CD8-positive, alpha-beta memory T cell (primary cell): ENCODE measurements at regions of chr7 and their contacts with region 1.

Region 1: DNA sequence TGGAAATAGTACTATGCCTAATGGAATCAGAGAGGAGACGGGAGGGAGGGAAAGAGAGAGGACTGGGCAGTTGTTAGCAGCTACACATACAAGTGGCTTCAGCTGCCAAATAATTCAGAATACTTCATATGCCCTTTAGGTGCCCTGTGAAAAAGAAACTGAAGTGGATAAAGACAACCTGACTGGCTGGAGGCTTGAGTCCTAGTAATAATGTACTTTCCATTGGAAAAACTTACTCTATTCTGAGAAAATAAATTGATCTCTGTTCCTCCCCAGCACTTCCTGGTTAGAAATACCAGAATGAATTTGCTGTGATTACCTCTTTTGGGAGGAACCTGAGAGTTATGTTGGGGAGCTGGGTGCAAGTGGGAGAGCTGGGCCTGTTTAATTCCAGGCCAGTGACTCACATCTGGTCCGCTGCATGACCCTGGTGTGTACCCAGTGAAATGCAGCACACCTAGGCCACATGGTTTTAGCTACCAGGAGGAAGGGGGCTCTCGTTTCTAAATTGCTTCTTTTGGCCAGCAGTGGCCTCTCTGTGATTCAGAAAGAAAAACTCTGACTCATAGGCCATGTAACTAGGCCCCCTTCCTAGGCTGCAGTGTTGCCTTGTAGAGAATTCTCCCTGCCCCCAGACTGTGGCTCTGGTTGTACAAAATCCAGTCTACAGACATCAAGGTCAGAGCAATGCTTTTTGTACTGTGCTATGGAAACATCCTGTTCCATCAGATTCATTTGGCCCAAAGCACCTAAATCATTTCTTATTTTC is 6.5 kb downstream of the AGFG2 start:
- DNase-seq: peak in 3 of 5 donors; percentile 18 to 67 (median 24)
- H3K4me3 ChIP-seq: peak overlapping the region; percentile 46
- H3K4me3 Mint-ChIP-seq: peak overlapping the region; percentile 60 to 98 (median 96)
- H3K27ac ChIP-seq: peak overlapping the region; percentile 70
- H3K27ac Mint-ChIP-seq: peak overlapping the region; percentile 86 to 99 (median 98)
- H3K4me1 ChIP-seq: peaks cover 97% of the 10 kb centered on the region
- H3K4me1 Mint-ChIP-seq: peaks cover 94 to 100% (median 99%) of the 10 kb centered on the region in 3 donors
- H3K27me3 ChIP-seq: no peaks in the 10 kb centered on the region
- H3K27me3 Mint-ChIP-seq: no peaks in the 10 kb centered on the region

Region 2: GRCh38 chr7:100364480-100364879 is 181.1 kb before region 1 on chr7:
- CTCF ChIA-PET with region 1: no interaction called
- POLR2A ChIA-PET with region 1: interaction called, 11 read pairs
- DNase-seq: no peak
- H3K4me3 ChIP-seq: no peak overlapping the region
- H3K4me3 Mint-ChIP-seq: no peak overlapping the region
- H3K27ac ChIP-seq: no peak overlapping the region
- H3K27ac Mint-ChIP-seq: peak overlapping the region in 6 of 8 donors; percentile 7 to 85 (median 60)
- H3K4me1 ChIP-seq: peaks cover 10% of the 10 kb centered on the region
- H3K4me1 Mint-ChIP-seq: peaks cover 32 to 50% (median 46%) of the 10 kb centered on the region in 3 donors
- H3K27me3 ChIP-seq: no peaks in the 10 kb centered on the region
- H3K27me3 Mint-ChIP-seq: no peaks in the 10 kb centered on the region

Region 3: GRCh38 chr7:100469227-100470044 is 76.1 kb before region 1 on chr7:
- CTCF ChIA-PET with region 1: interaction called, 11 read pairs
- POLR2A ChIA-PET with region 1: interaction called, 5 read pairs
- DNase-seq: peak; percentile 69 to 86 (median 80)
- H3K4me3 ChIP-seq: no peak overlapping the region
- H3K4me3 Mint-ChIP-seq: no peak overlapping the region
- H3K27ac ChIP-seq: no peak overlapping the region
- H3K27ac Mint-ChIP-seq: peak overlapping the region in 7 of 8 donors; percentile 64 to 83 (median 70)
- H3K4me1 ChIP-seq: peaks cover 24% of the 10 kb centered on the region
- H3K4me1 Mint-ChIP-seq: peaks cover 17 to 46% (median 31%) of the 10 kb centered on the region in 3 donors
- H3K27me3 ChIP-seq: no peaks in the 10 kb centered on the region
- H3K27me3 Mint-ChIP-seq: no peaks in the 10 kb centered on the region

Region 4: DNA sequence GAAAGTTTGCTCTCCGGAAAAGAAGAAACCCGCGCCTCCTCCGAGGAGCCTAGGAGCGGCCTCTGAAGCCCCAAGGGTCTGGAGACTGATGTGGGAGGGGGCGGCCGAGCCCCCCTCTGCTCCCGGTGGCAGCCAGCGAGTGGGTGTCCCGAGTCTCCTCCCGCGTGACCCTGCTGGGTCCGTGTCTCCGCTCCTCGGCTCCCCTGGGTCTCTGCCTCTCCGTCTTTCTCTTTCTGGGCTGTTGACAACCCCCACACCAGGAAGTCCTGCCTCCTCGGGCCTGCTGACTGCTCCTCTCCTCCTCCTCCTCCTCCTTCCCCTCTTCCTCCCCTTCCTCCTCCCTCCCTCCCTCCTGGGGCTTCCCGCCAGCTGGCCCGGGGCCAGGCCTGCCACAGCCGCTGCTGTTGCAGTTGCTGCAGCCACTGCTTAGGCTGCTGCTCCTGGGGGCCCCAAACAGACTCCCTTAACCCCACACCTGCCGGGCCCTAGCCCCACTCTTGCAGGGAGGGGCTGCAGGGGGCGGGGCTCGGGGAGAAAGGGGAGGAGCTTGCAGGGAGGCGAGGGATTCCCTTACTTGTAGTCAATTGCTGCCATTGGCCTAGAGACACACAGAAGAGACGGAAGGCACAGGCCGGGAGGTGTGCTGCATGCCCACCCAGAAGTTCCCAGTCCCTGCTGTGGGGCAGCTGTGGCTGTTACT is 66.4 kb before region 1 on chr7 and contains the start of gene TSC22D4:
- CTCF ChIA-PET with region 1: interaction called, 30 read pairs
- POLR2A ChIA-PET with region 1: interaction called, 8 read pairs
- DNase-seq: peak; percentile 88 to 97 (median 93)
- H3K4me3 ChIP-seq: peak within 1 kb of the TSS; percentile 66
- H3K4me3 Mint-ChIP-seq: peak within 1 kb of the TSS; percentile 93 to 100 (median 99)
- H3K27ac ChIP-seq: peak within 1 kb of the TSS; percentile 90
- H3K27ac Mint-ChIP-seq: peak within 1 kb of the TSS; percentile 87 to 100 (median 94)
- H3K4me1 ChIP-seq: peaks cover 50% of the 10 kb centered on the region
- H3K4me1 Mint-ChIP-seq: peaks cover 31 to 50% (median 47%) of the 10 kb centered on the region in 3 donors
- H3K27me3 ChIP-seq: no peaks in the 10 kb centered on the region
- H3K27me3 Mint-ChIP-seq: peaks cover 0 to 6% of the 10 kb centered on the region in 2 donors
- total RNA-seq, gene TSC22D4: 96.2 to 99.1 TPM

Region 5: GRCh38 chr7:100516135-100516812 is 29.3 kb before region 1 on chr7:
- CTCF ChIA-PET with region 1: interaction called, 9 read pairs
- POLR2A ChIA-PET with region 1: interaction called, 12 read pairs
- DNase-seq: peak; percentile 30 to 84 (median 62)
- H3K4me3 ChIP-seq: peak overlapping the region; percentile 34
- H3K4me3 Mint-ChIP-seq: peak overlapping the region in 6 of 7 donors; percentile 57 to 87 (median 62)
- H3K27ac ChIP-seq: peak overlapping the region; percentile 10
- H3K27ac Mint-ChIP-seq: peak overlapping the region; percentile 0 to 87 (median 32)
- H3K4me1 ChIP-seq: peaks cover 36% of the 10 kb centered on the region
- H3K4me1 Mint-ChIP-seq: peaks cover 27 to 35% (median 29%) of the 10 kb centered on the region in 3 donors
- H3K27me3 ChIP-seq: no peaks in the 10 kb centered on the region
- H3K27me3 Mint-ChIP-seq: no peaks in the 10 kb centered on the region

Region 6: GRCh38 chr7:100611974-100612729 is 66.6 kb after region 1 on chr7 and contains the start of gene MOSPD3:
- CTCF ChIA-PET with region 1: no interaction called
- POLR2A ChIA-PET with region 1: no interaction called
- DNase-seq: peak; percentile 96 to 98 (median 98)
- H3K4me3 ChIP-seq: peak within 1 kb of the TSS; percentile 99
- H3K4me3 Mint-ChIP-seq: peak within 1 kb of the TSS; percentile 91 to 100 (median 99)
- H3K27ac ChIP-seq: peak within 1 kb of the TSS; percentile 99
- H3K27ac Mint-ChIP-seq: peak within 1 kb of the TSS; percentile 94 to 100 (median 100)
- H3K4me1 ChIP-seq: peaks cover 19% of the 10 kb centered on the region
- H3K4me1 Mint-ChIP-seq: peaks cover 20 to 24% (median 23%) of the 10 kb centered on the region in 3 donors
- H3K27me3 ChIP-seq: no peaks in the 10 kb centered on the region
- H3K27me3 Mint-ChIP-seq: no peaks in the 10 kb centered on the region
- total RNA-seq, gene MOSPD3: 16.2 to 16.3 TPM

Region 7: GRCh38 chr7:100626530-100627237 is 81.1 kb after region 1 on chr7:
- CTCF ChIA-PET with region 1: no interaction called
- POLR2A ChIA-PET with region 1: no interaction called
- DNase-seq: peak; percentile 80 to 93 (median 83)
- H3K4me3 ChIP-seq: peak overlapping the region; percentile 81
- H3K4me3 Mint-ChIP-seq: peak overlapping the region; percentile 69 to 82 (median 77)
- H3K27ac ChIP-seq: peak overlapping the region; percentile 54
- H3K27ac Mint-ChIP-seq: peak overlapping the region; percentile 58 to 88 (median 82)
- H3K4me1 ChIP-seq: peaks cover 16% of the 10 kb centered on the region
- H3K4me1 Mint-ChIP-seq: peaks cover 20 to 40% (median 33%) of the 10 kb centered on the region in 3 donors
- H3K27me3 ChIP-seq: no peaks in the 10 kb centered on the region
- H3K27me3 Mint-ChIP-seq: no peaks in the 10 kb centered on the region

Region 8: GRCh38 chr7:100642534-100642907 is 97.0 kb after region 1 on chr7:
- CTCF ChIA-PET with region 1: no interaction called
- POLR2A ChIA-PET with region 1: no interaction called
- DNase-seq: no peak
- H3K4me3 ChIP-seq: no peak overlapping the region
- H3K4me3 Mint-ChIP-seq: no peak overlapping the region
- H3K27ac ChIP-seq: no peak overlapping the region
- H3K27ac Mint-ChIP-seq: no peak overlapping the region
- H3K4me1 ChIP-seq: no peaks in the 10 kb centered on the region
- H3K4me1 Mint-ChIP-seq: no peaks in the 10 kb centered on the region
- H3K27me3 ChIP-seq: no peaks in the 10 kb centered on the region
- H3K27me3 Mint-ChIP-seq: peaks cover 6 to 10% of the 10 kb centered on the region in 2 donors